ENCODE measurements at regions of chrX and their contacts with region 1.

Region 1: GRCh38 chrX:136953867-136954787 is 73.6 kb upstream of the RBMX start:
- DNase-seq: peak; percentile 32
- H3K4me3 Mint-ChIP-seq: no peak overlapping the region
- H3K27ac Mint-ChIP-seq: no peak overlapping the region
- H3K4me1 Mint-ChIP-seq: no peaks in the 10 kb centered on the region
- H3K27me3 Mint-ChIP-seq: no peaks in the 10 kb centered on the region

Region 2: GRCh38 chrX:137031517-137032340 is 77.6 kb after region 1 on chrX:
- intact Hi-C with region 1: loop called (anchors 2 kb)
- DNase-seq: peak; percentile 42
- H3K4me3 Mint-ChIP-seq: no peak overlapping the region
- H3K27ac Mint-ChIP-seq: no peak overlapping the region
- H3K4me1 Mint-ChIP-seq: peaks cover 9% of the 10 kb centered on the region
- H3K27me3 Mint-ChIP-seq: peaks cover 39% of the 10 kb centered on the region

Region 3: DNA sequence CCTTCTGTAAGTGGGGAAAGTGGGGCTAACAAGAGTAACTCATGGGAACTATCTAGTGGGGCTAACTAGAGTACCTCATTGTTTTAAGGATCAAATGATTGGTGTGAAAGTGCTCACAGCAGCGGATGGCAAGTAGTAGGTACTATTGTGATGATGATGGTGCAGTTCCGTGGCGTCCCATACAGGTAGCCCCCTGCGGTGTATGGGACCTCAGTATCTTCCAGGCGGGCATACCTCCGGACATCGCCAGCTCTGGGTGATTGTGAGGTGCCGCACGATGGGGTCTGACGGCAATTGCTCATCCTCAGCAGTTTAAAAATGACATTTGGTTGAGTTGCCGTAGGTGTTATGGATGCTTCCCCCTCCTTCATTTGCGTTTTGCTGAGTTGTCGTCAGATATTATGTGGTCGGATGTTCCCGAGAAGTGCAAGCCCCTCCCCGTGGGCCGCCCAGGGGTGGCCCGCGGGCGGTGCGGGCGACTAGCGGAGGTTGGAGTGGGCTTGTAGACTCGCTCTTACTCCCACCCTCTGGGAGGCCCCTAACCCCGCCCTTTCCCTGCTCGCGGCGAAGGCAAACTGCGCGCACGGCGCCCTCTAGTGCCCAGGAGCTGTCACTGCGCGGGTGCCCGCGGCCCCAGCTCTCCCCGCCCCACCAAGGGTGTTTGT is 98.0 kb after region 1 on chrX:
- intact Hi-C with region 1: loop called (anchors 1 kb)
- DNase-seq: peak; percentile 71
- H3K4me3 Mint-ChIP-seq: peak overlapping the region; percentile 87
- H3K27ac Mint-ChIP-seq: peak overlapping the region; percentile 40
- H3K4me1 Mint-ChIP-seq: peaks cover 11% of the 10 kb centered on the region
- H3K27me3 Mint-ChIP-seq: peaks cover 28% of the 10 kb centered on the region

Region 4: GRCh38 chrX:137194164-137194563 is 240.0 kb after region 1 on chrX:
- intact Hi-C with region 1: loop called (anchors 1 kb)
- DNase-seq: peak; percentile 1
- H3K4me3 Mint-ChIP-seq: no peak overlapping the region
- H3K27ac Mint-ChIP-seq: no peak overlapping the region
- H3K4me1 Mint-ChIP-seq: no peaks in the 10 kb centered on the region
- H3K27me3 Mint-ChIP-seq: peaks cover 11% of the 10 kb centered on the region

Region 5: DNA sequence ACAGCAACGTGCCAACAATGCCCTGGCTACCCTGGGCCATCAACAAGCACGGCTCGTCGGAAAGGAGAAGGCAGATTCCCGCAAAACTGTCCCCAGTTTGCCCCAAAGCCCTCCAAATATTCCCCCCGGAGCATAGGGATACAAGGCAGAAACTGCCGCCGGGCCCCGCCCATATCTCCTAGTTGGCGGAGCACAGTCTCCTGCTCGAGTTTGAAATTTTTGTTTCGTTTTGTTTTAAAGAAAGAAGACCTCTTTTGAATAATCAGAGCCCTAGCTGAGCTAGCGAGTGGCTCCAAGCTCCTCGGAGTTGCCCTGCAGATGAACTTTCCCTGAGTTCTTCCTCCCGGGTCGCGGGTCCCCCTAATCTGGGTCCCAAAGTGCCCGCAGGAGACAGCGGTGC is 473.7 kb after region 1 on chrX:
- intact Hi-C with region 1: loop called (anchors 10 kb)
- DNase-seq: no peak
- H3K4me3 Mint-ChIP-seq: peak overlapping the region; percentile 64
- H3K27ac Mint-ChIP-seq: no peak overlapping the region
- H3K4me1 Mint-ChIP-seq: no peaks in the 10 kb centered on the region
- H3K27me3 Mint-ChIP-seq: peaks cover 59% of the 10 kb centered on the region

Measured in activated T-helper 1 cell treated with anti-CD3 and anti-CD28 coated beads, Interleukin-12 subunit alpha, Interleukin-12 subunit beta, Interleukin-2, Interleukin-4 antibody, amounts not matched to agents 30 ng/mL and 10 ng/mL and 1 ng/mL, durations not matched to agents 14 hours and 24 hours and 36 hours (primary cell).